Activated CD8-positive, alpha-beta memory T cell treated with anti-CD3 and anti-CD28 coated beads, Interleukin-2, amount 10 ng/mL, durations not matched to agents 7 days and 5 days (primary cell): ENCODE measurements at regions of chr3 and their contacts with region 1.

Region 1: DNA sequence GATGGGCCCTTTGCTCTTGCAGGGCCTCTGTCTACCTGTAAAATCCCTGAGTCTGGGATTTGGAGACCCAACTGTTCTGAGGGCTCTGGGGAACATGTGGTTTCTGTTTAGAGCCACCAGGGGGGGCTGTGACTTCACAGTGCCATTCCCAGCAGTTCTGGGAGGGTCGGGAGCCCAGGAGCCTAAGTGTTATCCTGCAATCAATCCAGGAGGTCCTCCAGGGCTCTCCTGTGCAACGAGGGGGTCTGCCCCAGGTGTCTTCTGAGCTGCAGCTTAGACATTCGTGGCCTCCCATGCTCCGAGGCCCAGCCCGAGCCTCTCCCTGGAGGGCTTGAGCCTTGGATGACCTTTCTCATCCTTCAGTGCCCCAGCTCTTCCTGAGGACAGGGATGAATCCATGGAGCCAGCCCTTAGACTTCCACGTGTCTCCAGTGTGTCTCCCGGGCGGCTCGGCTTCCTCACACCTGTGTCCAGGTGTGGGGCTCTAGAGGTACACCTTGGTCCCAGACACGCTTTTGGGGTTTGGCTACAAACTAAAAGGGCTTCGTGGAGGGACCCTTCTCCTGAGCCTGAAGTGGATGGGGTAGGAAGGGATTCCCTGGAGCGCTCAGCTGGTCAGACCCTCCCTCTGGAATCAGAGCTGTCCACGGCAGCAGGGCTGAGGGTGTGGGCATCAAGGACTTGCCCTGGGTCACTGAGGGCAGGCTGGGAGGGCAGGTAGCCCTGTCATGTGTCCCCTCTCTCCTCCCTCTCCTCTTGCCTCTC is 20.3 kb upstream of the ABTB1 start:
- DNase-seq: no peak
- ATAC-seq: peak; percentile 61
- H3K4me3 Mint-ChIP-seq: no peak overlapping the region
- H3K27ac Mint-ChIP-seq: no peak overlapping the region
- H3K4me1 Mint-ChIP-seq: no peaks in the 10 kb centered on the region
- H3K27me3 Mint-ChIP-seq: peaks cover 7% of the 10 kb centered on the region

Region 2: DNA sequence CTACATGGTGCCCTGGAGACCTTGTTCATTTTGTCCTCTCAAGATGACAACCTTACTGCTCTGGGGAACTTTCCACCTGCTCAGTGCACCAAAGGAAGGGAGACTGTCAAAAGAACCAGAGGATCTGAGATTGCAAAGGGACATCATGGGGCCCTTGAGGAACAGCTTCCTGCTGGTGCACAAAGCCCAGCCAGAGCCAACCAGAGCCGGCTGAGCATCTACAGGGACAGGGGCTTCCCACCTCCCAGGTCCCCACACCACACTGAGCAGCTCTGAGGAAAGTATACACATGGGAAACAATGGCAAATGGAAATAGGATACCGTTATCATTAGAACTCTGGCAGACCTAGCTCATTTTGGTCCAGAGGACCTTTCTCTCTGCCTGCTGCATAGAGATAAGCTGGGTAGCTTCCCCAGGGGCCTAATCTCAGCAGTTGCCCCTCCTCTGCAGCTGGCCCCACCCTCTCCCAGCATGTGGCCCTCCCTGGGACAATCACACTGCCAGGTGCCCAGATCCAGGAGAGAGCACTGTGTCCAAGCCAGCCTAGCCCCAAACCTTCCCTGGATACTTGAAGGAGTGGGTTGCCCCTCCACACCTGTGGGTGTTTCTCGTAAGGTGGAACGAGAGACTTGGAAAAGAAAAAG is 241.2 kb before region 1 on chr3:
- CTCF ChIA-PET with region 1: no interaction called
- DNase-seq: no peak
- ATAC-seq: no peak
- H3K4me3 Mint-ChIP-seq: no peak overlapping the region
- H3K27ac Mint-ChIP-seq: no peak overlapping the region
- H3K4me1 Mint-ChIP-seq: no peaks in the 10 kb centered on the region
- H3K27me3 Mint-ChIP-seq: peaks cover 21% of the 10 kb centered on the region

Region 3: DNA sequence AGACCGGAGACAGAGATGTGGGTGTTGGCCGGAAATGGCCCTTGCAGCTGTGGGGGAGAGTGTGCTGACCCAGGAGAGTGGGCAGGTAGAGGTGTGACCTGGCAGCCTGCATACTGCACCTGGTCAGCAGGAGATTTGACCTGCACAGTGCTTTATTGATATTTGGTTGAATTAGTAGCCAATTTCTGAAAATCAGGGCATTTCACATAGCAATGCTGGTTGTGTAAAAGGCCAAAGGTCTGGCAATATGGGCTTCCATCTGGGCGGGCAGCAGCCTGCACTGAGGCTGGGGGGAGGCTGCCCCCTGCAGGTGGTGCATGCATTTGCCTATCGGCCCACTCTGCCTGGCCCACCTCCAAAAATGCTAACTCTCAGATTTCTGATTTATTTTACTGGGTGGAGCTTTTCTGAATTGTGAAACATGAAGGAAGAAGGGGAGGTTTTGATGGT is 179.3 kb after region 1 on chr3:
- CTCF ChIA-PET with region 1: interaction called, 10 read pairs
- DNase-seq: peak; percentile 65
- ATAC-seq: peak; percentile 76
- H3K4me3 Mint-ChIP-seq: no peak overlapping the region
- H3K27ac Mint-ChIP-seq: no peak overlapping the region
- H3K4me1 Mint-ChIP-seq: peaks cover 3% of the 10 kb centered on the region
- H3K27me3 Mint-ChIP-seq: peaks cover 5% of the 10 kb centered on the region